ENCODE measurements at regions of chr10 and their contacts with region 1.

Region 1: GRCh38 chr10:75111367-75111906 is at the start of gene SAMD8:
- DNase-seq: peak; percentile 99
- H3K4me3 Mint-ChIP-seq: peak within 1 kb of the TSS; percentile 97
- H3K27ac Mint-ChIP-seq: peak within 1 kb of the TSS; percentile 99
- H3K4me1 Mint-ChIP-seq: peaks cover 52% of the 10 kb centered on the region
- H3K27me3 Mint-ChIP-seq: no peaks in the 10 kb centered on the region
- total RNA-seq, gene SAMD8: 18.5 to 20.5 TPM

Region 2: DNA sequence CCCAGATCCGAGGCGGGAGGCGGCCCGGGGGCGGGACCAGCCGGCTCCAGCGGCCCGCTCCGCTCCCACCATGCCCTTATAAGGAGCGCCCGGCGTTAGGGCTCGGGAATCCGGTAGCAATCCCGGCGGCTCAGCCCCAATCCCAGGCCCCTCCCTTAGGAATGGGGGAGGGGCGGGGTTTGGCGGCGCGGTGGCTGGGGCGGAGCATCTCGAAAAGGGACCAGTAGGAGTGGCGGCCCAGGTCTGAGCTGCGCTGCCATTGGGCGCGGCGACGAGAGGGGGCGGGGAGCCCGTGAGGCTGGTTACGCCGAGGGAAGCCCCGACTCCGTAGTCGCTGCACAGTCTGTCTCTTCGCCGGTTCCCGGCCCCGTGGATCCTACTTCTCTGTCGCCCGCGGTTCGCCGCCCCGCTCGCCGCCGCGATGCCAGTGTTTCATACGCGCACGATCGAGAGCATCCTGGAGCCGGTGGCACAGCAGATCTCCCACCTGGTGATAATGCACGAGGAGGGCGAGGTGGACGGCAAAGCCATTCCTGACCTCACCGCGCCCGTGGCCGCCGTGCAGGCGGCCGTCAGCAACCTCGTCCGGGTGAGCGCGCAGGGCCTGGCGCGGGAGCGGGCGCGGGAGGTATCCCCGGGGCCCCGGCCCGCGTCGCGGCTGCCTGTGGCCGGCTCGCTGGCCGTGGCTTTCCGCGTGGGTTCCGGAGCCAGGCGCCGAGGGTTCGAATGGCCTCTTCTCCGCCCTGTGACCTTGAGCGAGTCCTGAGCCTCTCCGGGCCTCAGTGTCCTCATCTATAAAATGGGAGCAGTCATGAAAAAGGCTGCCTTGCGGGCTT is 1113.4 kb before region 1 on chr10 and contains the start of gene VCL:
- CTCF ChIA-PET with region 1: no interaction called
- POLR2A ChIA-PET with region 1: no interaction called
- intact Hi-C with region 1: loop called (anchors 10 kb)
- DNase-seq: peak; percentile 97
- H3K4me3 Mint-ChIP-seq: peak within 1 kb of the TSS; percentile 91
- H3K27ac Mint-ChIP-seq: peak within 1 kb of the TSS; percentile 89
- H3K4me1 Mint-ChIP-seq: peaks cover 33% of the 10 kb centered on the region
- H3K27me3 Mint-ChIP-seq: no peaks in the 10 kb centered on the region
- total RNA-seq, gene VCL: 27.8 to 29.2 TPM

Region 3: DNA sequence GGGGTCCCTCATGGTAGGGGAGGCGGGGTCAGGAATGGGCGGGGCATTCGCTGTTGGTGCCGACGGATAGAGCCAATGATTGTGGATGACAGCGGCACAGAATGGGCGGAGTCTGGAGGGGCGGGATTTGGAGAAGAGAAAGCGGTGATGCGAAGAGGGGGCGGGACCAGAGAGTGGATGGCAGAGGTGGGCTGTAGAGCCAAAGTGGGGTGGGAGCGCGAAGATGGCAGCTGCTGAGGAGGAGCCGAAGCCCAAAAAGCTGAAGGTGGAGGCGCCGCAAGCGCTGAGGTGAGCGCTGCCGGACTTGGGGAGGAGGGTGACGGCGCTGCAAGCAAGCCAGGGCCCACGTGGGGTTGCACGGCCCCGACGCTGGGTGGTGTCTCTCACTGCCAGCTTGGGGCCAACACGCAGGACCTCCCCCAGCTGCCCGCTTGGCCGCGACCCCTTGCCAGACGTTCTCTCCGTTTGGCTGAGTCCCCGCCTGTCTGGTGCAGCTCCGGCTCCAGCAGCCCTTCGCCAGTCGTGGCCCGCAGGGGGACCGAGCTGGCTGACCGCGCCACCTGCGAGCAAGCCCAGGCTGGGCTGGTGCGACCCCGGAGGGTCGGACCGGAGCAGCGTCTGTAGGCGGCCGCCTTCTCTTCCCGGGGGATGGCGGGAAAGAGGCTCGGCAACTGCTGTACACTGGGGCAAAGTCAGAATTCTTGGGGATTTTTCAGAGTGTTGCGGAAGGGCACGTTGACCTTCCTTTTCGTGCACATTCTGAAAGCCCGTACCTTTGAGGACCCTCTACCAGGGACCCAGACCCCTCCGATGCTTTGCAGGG is 960.2 kb before region 1 on chr10 and contains the start of gene ADK:
- CTCF ChIA-PET with region 1: no interaction called
- POLR2A ChIA-PET with region 1: no interaction called
- intact Hi-C with region 1: loop called (anchors 5 kb)
- DNase-seq: peak; percentile 100
- H3K4me3 Mint-ChIP-seq: no peak within 1 kb of the TSS
- H3K27ac Mint-ChIP-seq: no peak within 1 kb of the TSS
- H3K4me1 Mint-ChIP-seq: peaks cover 39% of the 10 kb centered on the region
- H3K27me3 Mint-ChIP-seq: no peaks in the 10 kb centered on the region
- total RNA-seq, gene ADK: 52.8 to 54.4 TPM

Region 4: GRCh38 chr10:75042292-75042974 is 69.0 kb before region 1 on chr10:
- CTCF ChIA-PET with region 1: no interaction called
- POLR2A ChIA-PET with region 1: interaction called, 4 read pairs
- intact Hi-C with region 1: loop called (anchors 2 kb)
- DNase-seq: peak; percentile 42
- H3K4me3 Mint-ChIP-seq: peak overlapping the region; percentile 12
- H3K27ac Mint-ChIP-seq: peak overlapping the region; percentile 88
- H3K4me1 Mint-ChIP-seq: peaks cover 59% of the 10 kb centered on the region
- H3K27me3 Mint-ChIP-seq: no peaks in the 10 kb centered on the region

Region 5: DNA sequence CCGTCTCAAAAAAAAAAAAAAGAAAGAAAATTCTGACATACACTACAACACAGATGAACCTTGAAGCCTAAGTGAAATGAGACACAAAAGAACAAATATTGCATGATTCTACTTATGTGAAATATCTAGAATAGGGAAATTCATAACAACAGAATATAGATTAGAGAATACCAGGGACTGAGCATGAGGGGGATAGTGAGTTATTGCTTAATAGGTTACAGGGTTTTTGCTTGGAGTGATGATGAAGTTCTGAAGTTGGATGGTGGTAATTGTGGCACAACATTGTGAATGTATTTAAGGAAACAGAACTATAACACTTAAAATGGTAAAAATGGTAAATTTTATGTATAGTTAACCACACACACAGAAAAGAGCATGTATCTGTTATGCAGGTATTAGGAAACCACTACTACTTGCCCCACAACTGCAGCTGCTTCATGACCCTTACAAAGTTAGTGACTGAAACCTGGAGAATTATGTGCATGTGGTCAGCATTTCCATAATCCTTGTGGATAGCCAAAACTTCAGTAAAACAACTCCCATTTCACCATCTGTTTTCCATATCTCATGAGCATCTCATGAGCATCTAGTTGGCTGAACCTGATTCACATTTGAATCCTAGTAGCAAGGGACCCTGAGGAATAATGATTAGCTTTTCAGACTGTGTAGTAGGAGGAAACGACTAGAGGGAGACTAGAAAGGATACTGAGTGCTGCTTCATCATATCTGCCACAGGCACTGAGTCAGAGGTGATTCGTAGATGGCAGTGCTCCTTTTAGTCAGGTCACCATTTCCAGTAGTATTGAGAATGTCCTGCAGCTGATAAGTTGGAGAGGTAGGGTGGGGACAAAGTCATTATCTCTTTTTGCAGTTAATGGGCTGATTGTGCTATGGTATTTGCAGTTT is 26.3 kb after region 1 on chr10:
- CTCF ChIA-PET with region 1: no interaction called
- POLR2A ChIA-PET with region 1: interaction called, 6 read pairs
- intact Hi-C with region 1: loop called (anchors 1 kb)
- DNase-seq: peak; percentile 63
- H3K4me3 Mint-ChIP-seq: no peak overlapping the region
- H3K27ac Mint-ChIP-seq: peak overlapping the region; percentile 73
- H3K4me1 Mint-ChIP-seq: peaks cover 33% of the 10 kb centered on the region
- H3K27me3 Mint-ChIP-seq: no peaks in the 10 kb centered on the region

Region 6: DNA sequence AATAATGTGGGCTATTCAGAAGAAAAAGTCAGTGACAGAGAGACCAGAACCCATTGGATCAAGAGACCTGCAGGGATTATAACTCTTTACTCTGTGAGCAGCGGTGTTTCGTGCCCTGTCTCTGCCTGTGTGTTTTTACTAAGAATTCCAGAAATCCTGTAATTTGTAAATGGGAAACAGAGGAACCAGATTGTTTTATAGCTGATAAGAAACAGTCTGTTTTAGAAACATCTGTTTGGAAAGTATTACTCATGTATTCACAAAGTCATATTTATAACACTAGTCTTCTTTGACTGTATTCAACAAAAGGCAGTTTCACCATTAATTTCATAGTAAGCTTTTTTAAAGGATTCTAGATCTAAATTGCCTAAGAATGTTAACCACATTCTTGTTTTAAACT is 69.2 kb after region 1 on chr10:
- CTCF ChIA-PET with region 1: interaction called, 3 read pairs
- POLR2A ChIA-PET with region 1: no interaction called
- intact Hi-C with region 1: loop called (anchors 5 kb)
- DNase-seq: no peak
- H3K4me3 Mint-ChIP-seq: no peak overlapping the region
- H3K27ac Mint-ChIP-seq: peak overlapping the region; percentile 49
- H3K4me1 Mint-ChIP-seq: peaks cover 30% of the 10 kb centered on the region
- H3K27me3 Mint-ChIP-seq: no peaks in the 10 kb centered on the region

Region 7: DNA sequence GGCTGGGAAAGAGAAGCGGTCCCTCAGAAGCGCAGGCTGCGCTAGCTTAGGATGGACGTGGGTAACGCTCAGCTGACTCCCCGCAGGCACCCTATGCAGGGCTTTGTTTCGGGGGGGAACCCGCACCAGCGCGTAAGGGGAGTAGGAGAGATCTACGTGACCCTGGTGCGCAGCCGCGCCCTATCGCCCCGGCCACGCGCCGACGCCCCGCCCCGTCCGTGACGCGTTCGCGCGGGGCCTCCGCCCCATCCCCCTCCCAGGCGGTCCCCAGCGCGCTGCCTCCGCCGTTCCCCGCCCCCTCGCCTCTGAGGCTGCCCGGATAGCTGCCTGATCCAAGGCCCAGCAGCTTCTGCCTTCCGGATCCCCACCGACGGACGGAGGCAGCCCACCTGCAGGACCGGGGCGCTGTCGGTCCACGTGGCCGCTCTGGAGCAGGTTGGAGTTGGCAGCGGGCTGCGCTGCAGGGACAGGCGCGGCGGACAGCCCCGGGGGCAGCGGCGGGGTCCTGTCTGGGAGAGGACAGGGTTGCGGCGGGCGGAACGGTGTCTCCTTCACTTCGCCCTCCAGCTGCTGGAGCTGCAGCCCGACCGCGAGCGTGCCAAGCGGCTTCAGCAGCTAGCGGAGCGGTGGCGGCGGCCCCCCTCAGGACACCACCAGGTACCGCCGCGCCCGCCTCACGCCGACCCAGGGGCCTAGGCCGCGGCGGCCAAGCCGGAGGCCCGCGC is 99.0 kb after region 1 on chr10 and contains the start of gene VDAC2:
- CTCF ChIA-PET with region 1: no interaction called
- POLR2A ChIA-PET with region 1: interaction called, 23 read pairs
- intact Hi-C with region 1: loop called (anchors 1 kb)
- DNase-seq: peak; percentile 95
- H3K4me3 Mint-ChIP-seq: peak within 1 kb of the TSS; percentile 89
- H3K27ac Mint-ChIP-seq: peak within 1 kb of the TSS; percentile 98
- H3K4me1 Mint-ChIP-seq: peaks cover 36% of the 10 kb centered on the region
- H3K27me3 Mint-ChIP-seq: no peaks in the 10 kb centered on the region
- total RNA-seq, gene VDAC2: 217 to 221 TPM

Measured in activated CD4-positive, alpha-beta memory T cell treated with anti-CD3 and anti-CD28 coated beads for 36 hours (primary cell).